AG04449 (cell line): ENCODE measurements at regions of chr10 and their contacts with region 1.

Region 1: GRCh38 chr10:29590915-29591650 is 43.7 kb downstream of the SVIL start:
- DNase-seq: no peak
- H3K4me3 ChIP-seq: no peak overlapping the region
- CTCF ChIP-seq: no peak

Region 2: DNA sequence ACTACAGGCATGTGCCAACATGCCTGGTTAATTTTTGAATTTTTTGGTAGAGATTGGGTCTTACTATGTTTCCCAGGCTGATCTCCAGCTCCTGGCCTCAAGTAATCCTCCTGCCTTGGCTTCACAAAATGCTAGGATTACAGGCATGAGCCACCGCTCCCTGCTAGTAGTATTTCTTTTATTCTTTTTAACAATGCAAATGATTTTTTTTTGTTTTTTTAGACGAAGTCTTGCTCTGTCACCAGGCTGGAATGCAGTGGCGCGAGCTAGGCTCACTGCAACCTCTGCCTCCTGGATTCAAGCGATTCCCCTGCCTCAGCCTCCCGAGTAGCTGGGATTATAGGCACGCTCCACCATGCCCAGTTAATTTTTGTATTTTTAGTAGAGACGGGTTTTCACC is 14.4 kb before region 1 on chr10:
- CTCF ChIA-PET with region 1: interaction called, 46 read pairs
- POLR2A ChIA-PET with region 1: no interaction called
- DNase-seq: no peak
- H3K4me3 ChIP-seq: no peak overlapping the region
- CTCF ChIP-seq: no peak

Region 3: DNA sequence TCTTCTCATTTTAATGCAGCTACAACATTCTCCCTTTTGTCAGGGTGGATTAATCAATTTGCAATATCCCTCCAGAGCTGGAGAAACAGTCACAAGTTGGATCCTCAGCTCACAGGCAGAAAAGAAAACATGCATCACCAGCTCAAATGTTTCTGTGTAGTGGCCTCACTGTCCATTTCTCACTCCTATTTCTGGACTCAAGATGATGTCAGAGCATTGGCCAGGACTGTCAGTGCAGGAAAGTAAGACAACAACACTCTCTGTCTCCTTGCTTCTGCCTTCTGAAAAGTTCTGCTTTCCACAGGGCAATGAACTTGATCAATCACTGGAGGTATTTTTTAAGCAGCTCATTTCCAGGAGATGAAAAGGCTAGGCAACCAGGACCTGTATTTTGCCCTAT is 51.9 kb after region 1 on chr10:
- CTCF ChIA-PET with region 1: interaction called, 10 read pairs
- POLR2A ChIA-PET with region 1: no interaction called
- DNase-seq: no peak
- H3K4me3 ChIP-seq: no peak overlapping the region
- CTCF ChIP-seq: no peak